Activated CD4-positive, alpha-beta T cell treated with anti-CD3 and anti-CD28 coated beads for 36 hours (primary cell): ENCODE measurements at regions of chr6 and their contacts with region 1.

Region 1: DNA sequence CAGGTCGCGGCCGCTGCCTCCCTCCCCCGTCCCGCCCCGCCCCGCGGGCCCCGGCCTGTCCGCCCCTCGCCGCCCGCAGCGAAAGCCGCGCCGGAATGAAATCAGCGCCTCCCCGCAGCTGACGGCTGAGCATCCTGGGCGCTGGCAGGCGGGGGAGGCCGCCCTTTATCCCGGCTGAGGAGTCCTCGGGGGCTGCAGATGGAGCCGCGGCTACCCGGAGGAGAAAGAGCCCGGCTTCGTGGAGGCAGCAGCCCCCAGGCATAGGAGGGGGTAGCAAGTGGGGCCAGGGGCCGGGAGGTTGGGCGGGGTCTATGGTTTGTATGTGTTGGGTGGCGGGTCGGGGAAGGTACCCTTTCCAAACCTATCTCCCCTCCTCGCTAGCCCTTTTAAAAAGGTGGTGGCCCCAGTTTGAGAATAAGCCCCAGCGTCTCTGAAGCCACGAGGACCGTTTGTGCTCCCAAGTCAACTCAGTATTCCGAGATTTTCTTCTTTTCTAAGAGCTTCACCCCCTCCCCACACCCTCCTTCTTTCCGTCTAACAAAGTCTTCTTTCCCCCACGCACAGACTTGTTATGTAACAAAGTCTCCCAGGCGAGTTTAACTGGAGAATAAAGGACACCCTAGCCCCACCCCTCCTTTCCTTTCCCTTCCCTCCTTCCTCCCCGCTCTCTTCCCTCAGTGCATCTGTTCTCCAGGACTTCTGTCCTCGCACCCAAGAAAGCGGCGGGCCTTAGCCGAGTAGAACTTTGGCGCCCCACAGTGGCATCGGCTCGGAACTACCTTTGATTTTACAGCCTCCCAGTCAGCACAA is 11.0 kb downstream of the POU3F2 start:
- DNase-seq: peak; percentile 82
- ATAC-seq: peak; percentile 74
- H3K4me3 Mint-ChIP-seq: peak overlapping the region; percentile 6
- H3K27ac Mint-ChIP-seq: no peak overlapping the region
- H3K4me1 Mint-ChIP-seq: peaks cover 21% of the 10 kb centered on the region
- H3K27me3 Mint-ChIP-seq: peaks cover 69% of the 10 kb centered on the region

Region 2: DNA sequence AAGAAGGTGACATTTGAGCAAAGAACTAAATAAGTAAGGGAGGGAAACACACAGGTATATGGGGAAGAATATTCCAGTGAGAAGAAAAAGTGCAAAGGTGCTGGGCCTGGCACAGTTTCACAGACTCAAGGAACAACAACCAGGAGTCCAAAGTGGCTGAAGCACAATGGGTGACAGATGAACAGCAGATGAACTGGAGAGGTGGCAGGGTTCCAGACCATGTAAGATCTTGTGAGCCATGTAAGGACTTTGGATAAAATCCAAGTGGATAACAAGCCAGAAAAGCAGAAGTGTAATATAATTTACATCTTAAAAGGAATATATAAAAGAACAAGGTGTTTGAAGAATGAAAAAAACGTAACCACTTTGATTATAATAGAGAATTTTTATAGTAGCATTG is 1650.3 kb before region 1 on chr6:
- CTCF ChIA-PET with region 1: no interaction called
- POLR2A ChIA-PET with region 1: no interaction called
- intact Hi-C with region 1: loop called in 1 of 2 experiments (anchors 10 kb)
- DNase-seq: no peak
- ATAC-seq: no peak
- H3K4me3 Mint-ChIP-seq: no peak overlapping the region
- H3K27ac Mint-ChIP-seq: no peak overlapping the region
- H3K4me1 Mint-ChIP-seq: no peaks in the 10 kb centered on the region
- H3K27me3 Mint-ChIP-seq: no peaks in the 10 kb centered on the region

Region 3: GRCh38 chr6:97497713-97498331 is 1347.6 kb before region 1 on chr6:
- CTCF ChIA-PET with region 1: interaction called, 6 read pairs
- POLR2A ChIA-PET with region 1: no interaction called
- intact Hi-C with region 1: loop called (anchors 1 kb)
- DNase-seq: peak; percentile 76
- ATAC-seq: peak; percentile 91
- H3K4me3 Mint-ChIP-seq: no peak overlapping the region
- H3K27ac Mint-ChIP-seq: no peak overlapping the region
- H3K4me1 Mint-ChIP-seq: no peaks in the 10 kb centered on the region
- H3K27me3 Mint-ChIP-seq: peaks cover 6% of the 10 kb centered on the region

Region 4: GRCh38 chr6:97705568-97705967 is 1139.8 kb before region 1 on chr6:
- CTCF ChIA-PET with region 1: no interaction called
- POLR2A ChIA-PET with region 1: no interaction called
- intact Hi-C with region 1: loop called (anchors 5 kb)
- DNase-seq: no peak
- ATAC-seq: no peak
- H3K4me3 Mint-ChIP-seq: no peak overlapping the region
- H3K27ac Mint-ChIP-seq: no peak overlapping the region
- H3K4me1 Mint-ChIP-seq: no peaks in the 10 kb centered on the region
- H3K27me3 Mint-ChIP-seq: no peaks in the 10 kb centered on the region

Region 5: GRCh38 chr6:98724537-98724936 is 120.9 kb before region 1 on chr6:
- CTCF ChIA-PET with region 1: no interaction called
- POLR2A ChIA-PET with region 1: no interaction called
- intact Hi-C with region 1: no loop called
- DNase-seq: no peak
- ATAC-seq: no peak
- H3K4me3 Mint-ChIP-seq: no peak overlapping the region
- H3K27ac Mint-ChIP-seq: no peak overlapping the region
- H3K4me1 Mint-ChIP-seq: no peaks in the 10 kb centered on the region
- H3K27me3 Mint-ChIP-seq: peaks cover 2% of the 10 kb centered on the region

Region 6: GRCh38 chr6:98769544-98769943 is 75.9 kb before region 1 on chr6:
- CTCF ChIA-PET with region 1: interaction called, 7 read pairs
- POLR2A ChIA-PET with region 1: no interaction called
- intact Hi-C with region 1: loop called (anchors 1 to 5 kb)
- DNase-seq: peak; percentile 48
- ATAC-seq: no peak
- H3K4me3 Mint-ChIP-seq: no peak overlapping the region
- H3K27ac Mint-ChIP-seq: no peak overlapping the region
- H3K4me1 Mint-ChIP-seq: peaks cover under 1% of the 10 kb centered on the region
- H3K27me3 Mint-ChIP-seq: peaks cover 24% of the 10 kb centered on the region

Region 7: DNA sequence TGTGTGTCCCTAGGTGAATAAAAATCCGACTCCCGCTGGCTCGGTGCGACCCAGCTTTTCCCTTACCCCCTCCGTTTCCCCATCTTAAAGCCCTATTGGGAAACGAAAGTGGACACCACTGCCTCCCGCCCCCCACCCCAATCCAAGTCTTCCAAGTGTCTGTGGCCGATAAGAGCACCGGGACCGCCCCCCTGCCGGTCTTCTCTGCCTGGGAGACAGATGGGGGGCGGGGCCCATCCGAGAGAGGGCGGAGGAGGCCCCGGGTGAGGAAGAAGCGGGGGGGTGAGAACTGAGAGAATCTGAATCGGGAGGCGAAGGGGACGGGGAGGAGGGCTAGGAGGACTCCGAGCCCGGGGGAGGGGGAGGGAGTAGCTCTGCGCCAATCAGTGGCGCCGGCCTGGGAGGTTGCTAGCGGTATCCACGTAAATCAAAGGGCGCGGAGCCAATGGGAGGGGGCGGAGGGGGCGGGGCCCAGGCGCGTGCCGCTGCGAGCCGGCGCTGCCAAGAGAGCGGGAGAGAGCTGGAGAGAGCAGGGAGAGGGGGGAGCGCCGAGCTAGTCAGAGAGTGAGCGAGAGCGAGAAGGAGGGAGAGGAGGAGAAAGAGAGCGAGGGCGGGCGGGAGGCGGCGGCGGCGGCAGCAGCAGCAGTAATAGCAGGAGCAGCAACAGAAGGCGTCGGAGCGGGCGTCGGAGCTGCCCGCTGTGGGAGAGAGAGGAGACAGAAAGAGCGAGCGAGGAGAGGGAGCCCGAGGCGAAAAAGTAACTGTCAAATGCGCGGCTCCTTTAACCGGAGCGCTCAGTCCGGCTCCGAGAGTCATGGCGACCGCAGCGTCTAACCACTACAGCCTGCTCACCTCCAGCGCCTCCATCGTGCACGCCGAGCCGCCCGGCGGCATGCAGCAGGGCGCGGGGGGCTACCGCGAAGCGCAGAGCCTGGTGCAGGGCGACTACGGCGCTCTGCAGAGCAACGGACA is 11.1 kb before region 1 on chr6 and contains the start of gene POU3F2:
- CTCF ChIA-PET with region 1: interaction called, 11 read pairs
- POLR2A ChIA-PET with region 1: no interaction called
- intact Hi-C with region 1: loop called (anchors 1 kb)
- DNase-seq: peak; percentile 85
- ATAC-seq: peak; percentile 85
- H3K4me3 Mint-ChIP-seq: peak within 1 kb of the TSS; percentile 75
- H3K27ac Mint-ChIP-seq: no peak within 1 kb of the TSS
- H3K4me1 Mint-ChIP-seq: peaks cover 43% of the 10 kb centered on the region
- H3K27me3 Mint-ChIP-seq: peaks cover 64% of the 10 kb centered on the region
- total RNA-seq, gene POU3F2: not detected

Region 8: DNA sequence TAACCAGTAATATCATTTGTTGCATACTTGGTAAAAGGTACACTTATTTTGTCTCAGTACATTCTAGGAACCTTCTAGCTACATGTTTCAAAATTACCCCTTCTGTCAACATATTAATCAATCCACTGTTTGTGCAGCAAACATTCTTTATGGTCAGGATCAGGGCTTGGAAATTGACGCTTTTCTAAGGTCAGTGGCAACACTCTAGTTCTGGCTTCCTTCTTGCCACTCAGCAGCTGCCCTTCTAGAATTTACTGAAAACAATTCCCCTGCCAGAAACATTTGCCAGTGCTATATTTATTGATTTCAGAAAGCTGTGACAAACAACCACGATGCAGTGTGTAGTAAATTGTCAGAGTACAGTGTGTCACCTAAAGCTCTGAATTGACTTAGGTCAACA is 187.0 kb after region 1 on chr6:
- CTCF ChIA-PET with region 1: no interaction called
- POLR2A ChIA-PET with region 1: no interaction called
- intact Hi-C with region 1: no loop called
- DNase-seq: no peak
- ATAC-seq: no peak
- H3K4me3 Mint-ChIP-seq: no peak overlapping the region
- H3K27ac Mint-ChIP-seq: no peak overlapping the region
- H3K4me1 Mint-ChIP-seq: no peaks in the 10 kb centered on the region
- H3K27me3 Mint-ChIP-seq: peaks cover 5% of the 10 kb centered on the region

Region 9: DNA sequence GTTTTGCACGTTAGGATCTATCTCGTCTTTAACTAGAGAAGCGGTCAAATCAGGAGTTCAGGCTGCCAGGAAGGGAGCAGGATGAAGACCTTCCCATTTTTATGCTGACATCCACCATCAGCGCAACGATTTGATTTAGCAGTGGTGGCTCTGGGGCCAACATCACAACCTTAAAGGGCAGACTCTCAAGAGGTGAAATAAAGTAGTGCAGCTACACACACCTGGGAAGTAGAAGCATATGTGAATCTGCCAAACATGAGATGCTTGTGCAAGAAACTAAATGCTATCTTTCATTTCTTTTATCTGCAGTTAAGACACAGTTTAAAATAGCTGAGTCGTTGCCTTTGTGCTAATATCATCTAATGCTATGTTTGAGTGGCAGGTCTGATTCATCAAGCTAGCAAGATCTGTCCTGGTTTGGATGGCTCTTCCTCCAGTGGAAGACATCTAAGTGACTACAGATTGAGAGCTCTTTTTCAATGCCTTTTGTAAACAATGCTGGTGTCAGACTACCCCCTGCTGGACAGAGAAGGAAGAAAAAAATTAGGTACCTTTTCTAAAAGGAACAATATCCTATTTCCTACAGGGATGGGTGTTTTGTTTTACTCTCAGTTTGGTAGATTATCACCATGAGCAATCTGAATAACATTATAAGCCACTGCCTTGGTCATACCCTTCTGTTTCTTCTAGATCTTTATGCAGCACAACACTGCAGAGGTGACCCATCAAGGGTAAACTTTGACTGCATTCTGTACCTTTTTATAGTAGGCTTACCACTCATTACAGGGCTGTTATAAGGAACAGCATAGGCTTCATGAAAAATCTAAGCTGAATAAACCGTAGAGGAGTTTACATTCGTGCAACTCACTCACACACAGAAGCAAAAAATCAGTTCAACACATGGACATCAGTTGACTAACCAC is 274.0 kb after region 1 on chr6:
- CTCF ChIA-PET with region 1: interaction called, 3 read pairs
- POLR2A ChIA-PET with region 1: no interaction called
- intact Hi-C with region 1: loop called (anchors 5 kb)
- DNase-seq: peak; percentile 35
- ATAC-seq: peak; percentile 53
- H3K4me3 Mint-ChIP-seq: no peak overlapping the region
- H3K27ac Mint-ChIP-seq: no peak overlapping the region
- H3K4me1 Mint-ChIP-seq: peaks cover 2% of the 10 kb centered on the region
- H3K27me3 Mint-ChIP-seq: peaks cover 19% of the 10 kb centered on the region